Natural killer cell (primary cell): ENCODE measurements at regions of chr11 and their contacts with region 1.

Region 1: GRCh38 chr11:116691771-116692177 is 81.0 kb downstream of the BUD13 start:
- DNase-seq: peak; percentile 42 to 70
- ATAC-seq: peak; percentile 44 to 90 (median 75)
- H3K4me3 ChIP-seq: no peak overlapping the region
- H3K4me3 Mint-ChIP-seq: no peak overlapping the region
- H3K27ac ChIP-seq: no peak overlapping the region
- H3K27ac Mint-ChIP-seq: no peak overlapping the region
- H3K4me1 ChIP-seq: no peaks in the 10 kb centered on the region
- H3K4me1 Mint-ChIP-seq: no peaks in the 10 kb centered on the region
- H3K27me3 ChIP-seq: no peaks in the 10 kb centered on the region
- H3K27me3 Mint-ChIP-seq: peaks cover 0 to 5% of the 10 kb centered on the region in 2 donors
- CTCF ChIP-seq: peak; percentile 67

Region 2: GRCh38 chr11:114745150-114745671 is 1946.6 kb before region 1 on chr11:
- intact Hi-C with region 1: loop called (anchors 10 kb)
- DNase-seq: no peak
- ATAC-seq: no peak
- H3K4me3 ChIP-seq: no peak overlapping the region
- H3K4me3 Mint-ChIP-seq: no peak overlapping the region
- H3K27ac ChIP-seq: no peak overlapping the region
- H3K27ac Mint-ChIP-seq: no peak overlapping the region
- H3K4me1 ChIP-seq: no peaks in the 10 kb centered on the region
- H3K4me1 Mint-ChIP-seq: no peaks in the 10 kb centered on the region
- H3K27me3 ChIP-seq: no peaks in the 10 kb centered on the region
- H3K27me3 Mint-ChIP-seq: peaks cover 0 to 8% of the 10 kb centered on the region in 2 donors
- CTCF ChIP-seq: no peak

Region 3: DNA sequence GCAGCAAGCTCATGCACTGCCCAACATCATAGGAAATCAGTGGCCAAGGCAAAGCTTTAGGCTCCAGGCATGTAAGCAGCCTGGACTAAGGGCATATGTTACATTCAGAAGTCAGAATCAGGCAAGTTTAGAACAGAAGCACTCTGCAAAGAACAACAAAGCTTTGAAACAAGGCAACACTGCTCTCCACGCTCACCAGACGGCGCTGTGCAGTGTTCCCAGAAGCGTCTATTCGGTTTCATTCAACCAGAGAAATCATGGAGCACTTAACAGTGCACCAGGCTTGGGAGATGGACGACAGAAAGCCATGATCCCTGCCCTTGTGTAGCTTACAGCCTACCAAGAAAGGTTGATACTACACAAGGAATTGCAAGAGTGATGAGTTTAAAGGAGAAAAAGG is 474.8 kb before region 1 on chr11:
- intact Hi-C with region 1: loop called (anchors 5 kb)
- DNase-seq: peak in 1 of 2 donors; percentile 12
- ATAC-seq: peak in 1 of 3 donors; percentile 40
- H3K4me3 ChIP-seq: no peak overlapping the region
- H3K4me3 Mint-ChIP-seq: no peak overlapping the region
- H3K27ac ChIP-seq: no peak overlapping the region
- H3K27ac Mint-ChIP-seq: no peak overlapping the region
- H3K4me1 ChIP-seq: no peaks in the 10 kb centered on the region
- H3K4me1 Mint-ChIP-seq: no peaks in the 10 kb centered on the region
- H3K27me3 ChIP-seq: no peaks in the 10 kb centered on the region
- H3K27me3 Mint-ChIP-seq: peaks cover 8% of the 10 kb centered on the region in 2 donors
- CTCF ChIP-seq: no peak

Region 4: DNA sequence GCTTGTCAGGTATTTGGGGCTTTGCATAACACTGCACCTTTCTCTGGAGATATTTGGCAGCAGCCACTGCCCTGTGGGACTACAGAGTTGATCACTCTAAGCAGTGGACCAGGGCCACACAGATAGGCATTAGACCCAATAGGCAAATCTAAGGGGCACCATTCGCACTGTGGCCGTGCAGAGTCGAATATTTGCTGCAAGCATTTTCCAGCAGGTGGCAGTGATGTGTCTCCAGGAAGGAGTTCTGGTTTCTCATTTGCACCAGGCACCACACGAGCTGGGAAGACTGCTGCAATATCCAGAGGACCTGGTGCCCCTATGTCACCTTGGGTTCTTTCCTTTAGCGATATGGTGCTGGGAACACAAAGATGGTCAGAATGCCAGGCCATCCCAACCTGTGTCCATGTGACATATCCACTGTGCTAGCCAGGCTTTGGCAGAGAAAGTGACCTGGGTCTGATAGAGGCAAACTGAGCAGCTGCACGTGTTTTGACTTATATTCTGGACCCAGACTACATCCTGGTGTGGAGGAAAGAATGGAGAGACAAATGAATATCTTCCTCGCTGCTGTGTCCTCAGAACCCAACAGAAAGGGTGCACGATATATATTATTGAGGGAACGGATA is 237.6 kb before region 1 on chr11:
- intact Hi-C with region 1: loop called (anchors 5 kb)
- DNase-seq: peak in 1 of 2 donors; percentile 15
- ATAC-seq: no peak
- H3K4me3 ChIP-seq: no peak overlapping the region
- H3K4me3 Mint-ChIP-seq: no peak overlapping the region
- H3K27ac ChIP-seq: no peak overlapping the region
- H3K27ac Mint-ChIP-seq: no peak overlapping the region
- H3K4me1 ChIP-seq: no peaks in the 10 kb centered on the region
- H3K4me1 Mint-ChIP-seq: no peaks in the 10 kb centered on the region
- H3K27me3 ChIP-seq: no peaks in the 10 kb centered on the region
- H3K27me3 Mint-ChIP-seq: peaks cover 14 to 29% of the 10 kb centered on the region in 2 donors
- CTCF ChIP-seq: no peak

Region 5: GRCh38 chr11:116665523-116665922 is 26.3 kb before region 1 on chr11:
- intact Hi-C with region 1: no loop called
- DNase-seq: no peak
- ATAC-seq: no peak
- H3K4me3 ChIP-seq: no peak overlapping the region
- H3K4me3 Mint-ChIP-seq: no peak overlapping the region
- H3K27ac ChIP-seq: no peak overlapping the region
- H3K27ac Mint-ChIP-seq: no peak overlapping the region
- H3K4me1 ChIP-seq: no peaks in the 10 kb centered on the region
- H3K4me1 Mint-ChIP-seq: no peaks in the 10 kb centered on the region
- H3K27me3 ChIP-seq: peaks cover 2% of the 10 kb centered on the region
- H3K27me3 Mint-ChIP-seq: peaks cover 29 to 38% of the 10 kb centered on the region in 2 donors
- CTCF ChIP-seq: no peak

Region 6: DNA sequence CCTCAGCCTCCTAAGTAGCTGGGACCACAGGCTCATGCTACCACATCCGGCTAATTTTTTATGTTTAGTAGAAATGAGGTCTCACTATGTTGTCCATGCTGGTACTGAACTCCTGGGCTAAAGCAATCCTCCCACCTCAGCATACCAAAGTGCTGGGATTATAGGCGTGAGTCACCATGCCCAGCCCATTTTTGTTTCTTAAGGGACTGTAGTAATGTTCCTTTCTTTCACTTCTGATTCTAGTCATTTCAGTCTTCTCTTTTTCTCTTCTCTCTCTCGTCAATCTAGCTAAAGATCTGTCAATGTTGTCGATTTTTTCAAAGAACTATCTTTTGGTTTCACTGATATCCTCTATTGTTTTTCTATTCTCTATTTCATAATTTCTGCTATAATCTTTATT is 256.6 kb after region 1 on chr11:
- intact Hi-C with region 1: no loop called
- DNase-seq: no peak
- ATAC-seq: peak in 1 of 3 donors; percentile 59
- H3K4me3 ChIP-seq: no peak overlapping the region
- H3K4me3 Mint-ChIP-seq: no peak overlapping the region
- H3K27ac ChIP-seq: peak overlapping the region; percentile 14
- H3K27ac Mint-ChIP-seq: peak overlapping the region in 1 of 2 donors; percentile 6
- H3K4me1 ChIP-seq: peaks cover 1% of the 10 kb centered on the region
- H3K4me1 Mint-ChIP-seq: peaks cover 16 to 24% of the 10 kb centered on the region in 2 donors
- H3K27me3 ChIP-seq: no peaks in the 10 kb centered on the region
- H3K27me3 Mint-ChIP-seq: no peaks in the 10 kb centered on the region
- CTCF ChIP-seq: no peak

Region 7: GRCh38 chr11:117249571-117249970 is 557.8 kb after region 1 on chr11:
- intact Hi-C with region 1: no loop called
- DNase-seq: no peak
- ATAC-seq: no peak
- H3K4me3 ChIP-seq: no peak overlapping the region
- H3K4me3 Mint-ChIP-seq: no peak overlapping the region
- H3K27ac ChIP-seq: no peak overlapping the region
- H3K27ac Mint-ChIP-seq: no peak overlapping the region
- H3K4me1 ChIP-seq: no peaks in the 10 kb centered on the region
- H3K4me1 Mint-ChIP-seq: no peaks in the 10 kb centered on the region
- H3K27me3 ChIP-seq: no peaks in the 10 kb centered on the region
- H3K27me3 Mint-ChIP-seq: no peaks in the 10 kb centered on the region
- CTCF ChIP-seq: no peak